AG04450 (cell line): ENCODE measurements at regions of chr4 and their contacts with region 1.

Region 1: DNA sequence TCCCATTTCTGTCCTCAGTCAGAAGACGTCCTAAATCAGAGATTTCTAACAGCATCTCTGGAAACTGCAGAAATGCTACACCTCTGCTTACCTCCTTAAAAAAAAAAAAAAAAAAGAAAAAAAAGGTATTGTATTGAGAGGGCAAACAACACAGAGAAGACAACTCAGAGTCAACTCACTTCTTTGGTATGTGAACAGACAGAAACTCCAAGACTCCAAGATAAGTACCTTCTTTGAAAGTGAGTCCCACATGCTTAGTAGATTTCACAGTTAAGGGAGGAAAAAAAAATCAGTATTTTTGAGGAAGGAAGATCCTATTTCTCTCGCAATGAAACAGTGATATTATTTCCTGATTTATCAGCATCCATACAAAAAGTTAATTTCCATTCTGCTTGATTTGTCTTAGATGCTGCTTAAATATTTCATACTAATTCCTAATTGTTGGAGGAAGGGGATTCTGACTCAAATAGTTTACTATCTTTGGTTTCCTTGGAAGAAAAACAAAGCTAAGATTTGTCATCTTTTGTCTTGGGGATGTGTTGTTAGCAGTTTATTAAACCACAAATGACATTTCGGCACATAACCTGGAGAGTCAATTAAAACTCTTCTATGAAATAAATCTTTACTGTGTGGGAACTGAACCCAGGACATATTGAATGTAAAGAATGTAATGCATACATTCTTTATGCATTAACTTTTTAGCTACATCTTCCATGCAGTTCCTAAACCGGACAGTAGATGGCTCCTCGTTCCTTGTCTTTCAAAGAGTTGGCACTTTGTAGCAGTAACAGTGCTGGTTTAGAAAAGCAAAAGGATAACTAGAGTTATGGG is 4.7 kb downstream of the RASGEF1B start:
- DNase-seq: peak; percentile 32
- H3K4me3 ChIP-seq: no peak overlapping the region
- H3K27ac ChIP-seq: no peak overlapping the region
- H3K27me3 ChIP-seq: peaks cover 18% of the 10 kb centered on the region
- CTCF ChIP-seq: peak; percentile 96

Region 2: DNA sequence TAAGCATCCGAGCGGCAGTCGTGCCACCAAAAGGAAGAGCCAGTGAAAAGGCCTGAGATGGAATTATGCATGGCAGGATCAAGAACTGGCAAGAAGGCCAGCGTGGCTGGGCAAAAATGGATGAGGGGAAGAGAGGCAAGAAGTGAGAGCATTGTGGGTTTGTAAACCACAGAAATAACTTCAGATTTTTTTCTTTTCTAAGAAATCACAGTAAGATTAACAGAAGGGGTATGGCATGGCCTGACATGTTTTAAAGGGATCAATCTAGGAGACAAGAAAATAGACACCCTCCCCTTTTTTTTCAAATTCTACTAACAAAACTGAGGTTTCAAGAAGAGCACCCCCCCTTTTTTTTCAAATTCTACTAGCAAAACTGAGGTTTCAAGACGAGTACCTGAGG is 354.0 kb before region 1 on chr4:
- CTCF ChIA-PET with region 1: no interaction called
- POLR2A ChIA-PET with region 1: no interaction called
- DNase-seq: no peak
- H3K4me3 ChIP-seq: no peak overlapping the region
- H3K27ac ChIP-seq: no peak overlapping the region
- H3K27me3 ChIP-seq: no peaks in the 10 kb centered on the region
- CTCF ChIP-seq: no peak

Region 3: GRCh38 chr4:81197864-81198524 is 269.1 kb before region 1 on chr4:
- CTCF ChIA-PET with region 1: no interaction called
- POLR2A ChIA-PET with region 1: no interaction called
- DNase-seq: no peak
- H3K4me3 ChIP-seq: no peak overlapping the region
- H3K27ac ChIP-seq: no peak overlapping the region
- H3K27me3 ChIP-seq: no peaks in the 10 kb centered on the region
- CTCF ChIP-seq: no peak

Region 4: GRCh38 chr4:81427344-81427821 is 39.7 kb before region 1 on chr4:
- CTCF ChIA-PET with region 1: interaction called, 19 read pairs
- POLR2A ChIA-PET with region 1: no interaction called
- DNase-seq: no peak
- H3K4me3 ChIP-seq: no peak overlapping the region
- H3K27ac ChIP-seq: no peak overlapping the region
- H3K27me3 ChIP-seq: peaks cover 2% of the 10 kb centered on the region
- CTCF ChIP-seq: no peak

Region 5: DNA sequence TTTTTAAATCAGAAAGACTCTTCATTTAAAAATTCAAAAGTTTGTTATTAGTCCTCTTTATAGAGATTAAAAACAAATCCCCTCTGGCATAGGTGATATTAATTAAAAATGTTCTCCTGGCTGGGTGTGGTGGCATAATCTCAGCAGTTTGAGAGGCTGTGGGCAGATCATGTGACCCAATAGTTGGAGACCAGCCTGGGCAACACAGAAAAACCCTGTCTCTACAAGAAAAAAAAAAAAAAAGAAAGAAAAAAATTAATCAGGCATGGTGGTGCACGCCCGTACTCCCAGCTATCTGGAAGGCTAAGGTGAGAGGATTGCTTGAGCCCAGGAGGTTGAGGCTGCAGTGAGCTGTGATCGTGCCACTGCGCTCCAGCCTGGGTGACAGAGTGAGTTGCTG is 34.2 kb before region 1 on chr4:
- CTCF ChIA-PET with region 1: interaction called, 13 read pairs
- POLR2A ChIA-PET with region 1: no interaction called
- DNase-seq: no peak
- H3K4me3 ChIP-seq: no peak overlapping the region
- H3K27ac ChIP-seq: no peak overlapping the region
- H3K27me3 ChIP-seq: no peaks in the 10 kb centered on the region
- CTCF ChIP-seq: no peak

Region 6: GRCh38 chr4:81445196-81445595 is 21.9 kb before region 1 on chr4:
- CTCF ChIA-PET with region 1: interaction called, 18 read pairs
- POLR2A ChIA-PET with region 1: no interaction called
- DNase-seq: no peak
- H3K4me3 ChIP-seq: no peak overlapping the region
- H3K27ac ChIP-seq: no peak overlapping the region
- H3K27me3 ChIP-seq: no peaks in the 10 kb centered on the region
- CTCF ChIP-seq: no peak

Region 7: GRCh38 chr4:81844717-81845116 is 377.7 kb after region 1 on chr4:
- CTCF ChIA-PET with region 1: interaction called, 37 read pairs
- POLR2A ChIA-PET with region 1: no interaction called
- DNase-seq: no peak
- H3K4me3 ChIP-seq: no peak overlapping the region
- H3K27ac ChIP-seq: no peak overlapping the region
- H3K27me3 ChIP-seq: no peaks in the 10 kb centered on the region
- CTCF ChIP-seq: peak; percentile 50

Region 8: GRCh38 chr4:82201805-82202641 is 735.0 kb after region 1 on chr4:
- CTCF ChIA-PET with region 1: interaction called, 11 read pairs
- POLR2A ChIA-PET with region 1: no interaction called
- DNase-seq: no peak
- H3K4me3 ChIP-seq: no peak overlapping the region
- H3K27ac ChIP-seq: no peak overlapping the region
- H3K27me3 ChIP-seq: no peaks in the 10 kb centered on the region
- CTCF ChIP-seq: peak; percentile 62

Region 9: DNA sequence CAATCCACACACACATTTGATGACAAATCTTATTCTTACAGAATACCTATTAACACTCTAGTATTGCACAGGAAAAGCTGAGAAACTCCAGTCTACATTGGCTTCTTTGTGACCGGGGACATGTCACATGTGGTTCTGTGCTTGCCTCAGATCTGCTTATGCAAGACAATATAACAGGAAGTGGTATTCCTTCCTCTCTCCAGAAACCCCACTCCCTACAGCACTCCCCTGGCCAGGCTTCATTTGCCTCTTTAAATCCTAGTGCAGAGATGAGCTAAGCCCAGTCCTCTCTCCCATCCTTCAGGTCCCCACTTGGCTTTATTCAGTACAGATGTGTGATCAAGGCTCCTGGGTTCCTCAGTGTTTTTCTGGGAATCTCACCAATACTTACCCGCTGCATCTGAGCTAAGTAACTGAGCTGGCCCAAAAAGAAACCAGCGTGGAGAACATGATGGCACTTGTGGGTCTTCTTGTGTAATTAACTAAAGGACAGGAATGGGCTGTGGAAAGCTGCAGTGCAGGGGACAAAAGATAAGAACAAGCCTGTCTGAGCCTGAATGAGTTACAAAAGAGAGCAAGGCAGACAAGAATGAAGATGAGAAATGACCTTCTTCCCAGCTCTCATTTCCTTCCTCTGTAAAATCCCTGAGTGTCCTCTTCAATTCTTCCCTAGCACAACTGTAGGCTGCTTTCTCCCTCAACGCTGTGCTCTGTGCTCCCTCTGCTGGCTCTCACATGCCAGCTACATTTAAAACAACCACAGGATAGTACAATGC is 801.2 kb after region 1 on chr4:
- CTCF ChIA-PET with region 1: interaction called, 48 read pairs
- POLR2A ChIA-PET with region 1: no interaction called
- DNase-seq: peak; percentile 13
- H3K4me3 ChIP-seq: no peak overlapping the region
- H3K27ac ChIP-seq: no peak overlapping the region
- H3K27me3 ChIP-seq: no peaks in the 10 kb centered on the region
- CTCF ChIP-seq: peak; percentile 84